Endothelial cell of umbilical vein (primary cell): ENCODE measurements at regions of chr14 and their contacts with region 1.

Region 1: GRCh38 chr14:20855652-20856291 is 35.4 kb upstream of the RNASE3 start:
- DNase-seq: peak; percentile 82
- H3K4me3 ChIP-seq: no peak overlapping the region
- H3K27ac ChIP-seq: no peak overlapping the region
- H3K4me1 ChIP-seq: no peaks in the 10 kb centered on the region
- H3K27me3 ChIP-seq: peaks cover 14 to 20% of the 10 kb centered on the region in 2 experiments
- CTCF ChIP-seq: peak; percentile 64 to 72
- POLR2A ChIP-seq: no peak

Region 2: GRCh38 chr14:20613094-20614037 is 242.4 kb before region 1 on chr14:
- CTCF ChIA-PET with region 1: no interaction called
- POLR2A ChIA-PET with region 1: no interaction called
- dilution Hi-C with region 1: no loop called
- intact Hi-C with region 1: loop called (anchors 5 kb)
- DNase-seq: peak; percentile 97
- H3K4me3 ChIP-seq: peak overlapping the region; percentile 48 to 86 (median 70)
- H3K27ac ChIP-seq: peak overlapping the region; percentile 27
- H3K4me1 ChIP-seq: peaks cover 11% of the 10 kb centered on the region
- H3K27me3 ChIP-seq: peaks cover 3 to 6% of the 10 kb centered on the region in 2 experiments
- CTCF ChIP-seq: peak; percentile 55 to 65
- POLR2A ChIP-seq: no peak

Region 3: GRCh38 chr14:20697273-20698017 is 158.3 kb before region 1 on chr14:
- CTCF ChIA-PET with region 1: interaction called, 96 read pairs
- POLR2A ChIA-PET with region 1: no interaction called
- dilution Hi-C with region 1: no loop called
- intact Hi-C with region 1: loop called (anchors 1 kb)
- DNase-seq: peak; percentile 89
- H3K4me3 ChIP-seq: no peak overlapping the region
- H3K27ac ChIP-seq: peak overlapping the region; percentile 30
- H3K4me1 ChIP-seq: peaks cover 11% of the 10 kb centered on the region
- H3K27me3 ChIP-seq: no peaks in the 10 kb centered on the region
- CTCF ChIP-seq: peak; percentile 73 to 90
- POLR2A ChIP-seq: no peak

Region 4: DNA sequence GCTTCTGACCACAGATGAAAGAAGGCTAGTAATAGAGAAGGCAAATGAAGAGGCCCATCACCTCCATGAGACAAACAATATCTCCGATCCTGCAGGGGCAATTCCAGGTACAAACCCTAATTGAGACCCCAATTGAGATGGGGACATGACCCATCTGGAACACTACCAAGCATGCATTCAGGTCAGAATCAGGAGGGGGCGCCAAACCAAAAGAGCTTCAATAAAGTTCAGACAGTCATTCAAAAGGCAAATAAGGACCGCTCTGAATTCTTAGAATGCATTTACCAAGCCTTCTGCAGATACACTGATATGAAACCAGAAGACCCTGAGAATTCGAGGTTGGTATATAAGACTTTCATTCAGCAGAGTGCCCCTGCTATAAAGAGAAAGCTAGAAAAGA is 97.8 kb before region 1 on chr14:
- CTCF ChIA-PET with region 1: interaction called, 88 read pairs
- POLR2A ChIA-PET with region 1: no interaction called
- dilution Hi-C with region 1: no loop called
- intact Hi-C with region 1: loop called (anchors 1 kb)
- DNase-seq: peak; percentile 51
- H3K4me3 ChIP-seq: no peak overlapping the region
- H3K27ac ChIP-seq: no peak overlapping the region
- H3K4me1 ChIP-seq: no peaks in the 10 kb centered on the region
- H3K27me3 ChIP-seq: peaks cover 7% of the 10 kb centered on the region in 2 experiments
- CTCF ChIP-seq: peak; percentile 43 to 59
- POLR2A ChIP-seq: no peak

Region 5: GRCh38 chr14:20807304-20808161 is 48.2 kb before region 1 on chr14:
- CTCF ChIA-PET with region 1: interaction called, 28 read pairs
- POLR2A ChIA-PET with region 1: no interaction called
- dilution Hi-C with region 1: no loop called
- intact Hi-C with region 1: loop called (anchors 1 kb)
- DNase-seq: peak; percentile 34
- H3K4me3 ChIP-seq: no peak overlapping the region
- H3K27ac ChIP-seq: no peak overlapping the region
- H3K4me1 ChIP-seq: peaks cover 16% of the 10 kb centered on the region
- H3K27me3 ChIP-seq: no peaks in the 10 kb centered on the region
- CTCF ChIP-seq: no peak
- POLR2A ChIP-seq: no peak

Region 6: DNA sequence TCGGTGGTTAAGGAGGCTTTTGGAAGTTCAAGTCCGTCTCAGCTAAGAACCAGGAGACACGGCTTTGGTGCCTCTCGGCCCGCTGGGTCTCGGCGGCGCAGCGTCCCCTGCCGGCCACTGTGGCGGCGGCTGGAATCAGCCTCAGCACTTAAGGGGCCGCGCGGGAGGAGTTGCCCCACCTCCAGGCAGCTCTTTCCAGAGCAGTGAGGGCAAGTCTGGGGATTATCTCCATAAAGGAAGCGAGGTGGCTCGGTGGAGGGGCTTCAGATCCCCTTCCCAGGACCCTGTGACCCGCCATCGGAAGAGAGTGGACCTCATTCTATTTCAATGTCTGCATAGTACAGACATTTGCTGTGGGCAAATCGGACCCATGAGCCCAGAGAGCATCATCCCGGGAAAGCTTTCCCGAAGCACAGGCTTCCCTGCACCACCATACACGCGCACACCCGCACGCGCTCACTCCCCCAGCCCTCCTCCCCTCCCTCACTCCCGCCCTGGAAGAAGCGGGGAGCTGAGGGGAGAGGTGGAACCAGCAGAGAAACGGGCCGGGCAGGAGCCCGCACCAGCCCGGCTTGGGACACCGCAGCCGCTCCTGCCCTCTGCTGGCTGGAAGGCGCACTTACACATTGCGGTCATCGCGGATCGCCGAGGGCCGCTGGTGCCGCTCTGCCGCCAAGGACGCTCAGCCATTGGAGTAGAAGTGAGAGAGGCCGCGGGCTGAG is 115.4 kb after region 1 on chr14:
- CTCF ChIA-PET with region 1: interaction called, 103 read pairs
- POLR2A ChIA-PET with region 1: no interaction called
- dilution Hi-C with region 1: no loop called
- intact Hi-C with region 1: loop called (anchors 1 kb)
- DNase-seq: peak; percentile 86
- H3K4me3 ChIP-seq: peak overlapping the region; percentile 15 to 64 (median 55)
- H3K27ac ChIP-seq: peak overlapping the region; percentile 8
- H3K4me1 ChIP-seq: peaks cover 21% of the 10 kb centered on the region
- H3K27me3 ChIP-seq: peaks cover 8 to 14% of the 10 kb centered on the region in 2 experiments
- CTCF ChIP-seq: peak; percentile 98 to 99
- POLR2A ChIP-seq: no peak